Vagina (tissue), 2 donors: ENCODE measurements at regions of chr14 and their contacts with region 1.

Region 1: DNA sequence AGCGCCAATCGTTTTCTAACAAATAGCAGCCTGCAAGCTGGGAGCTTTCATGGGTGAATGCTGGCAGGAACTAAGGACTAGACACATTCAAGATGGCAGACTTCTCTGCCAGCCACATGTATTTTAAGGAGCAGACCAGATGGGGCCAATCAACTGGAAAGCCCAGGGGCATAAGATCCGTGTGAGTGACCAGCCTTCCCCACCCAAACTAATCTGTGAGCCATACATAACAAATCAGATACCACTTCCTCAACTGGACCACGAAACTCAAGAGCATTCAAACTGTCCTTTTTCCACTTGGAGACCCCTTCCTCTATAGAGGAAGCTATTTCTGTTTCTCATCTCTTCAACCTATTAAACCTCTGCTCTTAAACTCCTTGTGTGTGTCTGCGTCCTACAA is 9.7 kb downstream of the TCL1B start:
- DNase-seq: peak in 1 of 2 donors; percentile 13
- H3K4me3 ChIP-seq: no peak overlapping the region
- H3K27ac ChIP-seq: no peak overlapping the region
- H3K4me1 ChIP-seq: no peaks in the 10 kb centered on the region
- H3K27me3 ChIP-seq: no peaks in the 10 kb centered on the region
- CTCF ChIP-seq: no peak
- POLR2A ChIP-seq: no peak

Region 2: GRCh38 chr14:95609387-95609990 is 86.4 kb before region 1 on chr14:
- intact Hi-C with region 1: no loop called
- DNase-seq: no peak
- H3K4me3 ChIP-seq: no peak overlapping the region
- H3K27ac ChIP-seq: no peak overlapping the region
- H3K4me1 ChIP-seq: no peaks in the 10 kb centered on the region
- H3K27me3 ChIP-seq: no peaks in the 10 kb centered on the region
- CTCF ChIP-seq: peak in 1 of 3 experiments; percentile 32
- POLR2A ChIP-seq: no peak

Region 3: DNA sequence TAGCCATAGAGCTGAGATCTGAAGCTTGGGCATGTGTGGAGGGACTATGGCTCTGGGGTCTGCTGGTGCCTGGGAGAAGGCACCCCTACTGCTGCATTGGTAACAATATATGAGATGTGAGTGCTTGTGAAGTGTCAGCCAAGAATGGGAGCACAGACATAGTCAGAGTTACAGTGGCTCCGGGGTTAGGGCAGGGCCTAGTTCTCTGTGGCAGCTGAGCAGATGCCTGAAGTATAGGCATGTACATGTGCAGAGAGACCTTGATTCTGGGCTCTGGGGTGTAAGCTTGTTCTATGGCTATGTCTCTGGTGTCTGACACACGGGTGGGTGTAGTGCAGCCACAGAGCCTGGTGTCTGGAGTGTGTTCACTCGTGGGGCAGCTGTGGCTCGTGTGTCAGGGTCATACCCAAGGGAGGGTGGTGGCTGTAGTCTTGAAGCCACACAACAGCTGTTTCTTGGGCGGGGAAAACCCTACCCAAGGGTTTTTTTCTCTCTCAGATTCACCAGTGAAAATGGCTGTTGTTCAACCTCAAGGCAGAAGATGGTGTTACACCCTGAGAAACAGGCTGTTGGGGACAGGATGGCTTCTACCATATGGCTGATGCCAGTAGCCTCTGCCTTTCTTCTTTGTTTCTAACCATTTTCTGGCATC is 29.9 kb after region 1 on chr14:
- intact Hi-C with region 1: loop called (anchors 1 kb)
- DNase-seq: no peak
- H3K4me3 ChIP-seq: no peak overlapping the region
- H3K27ac ChIP-seq: no peak overlapping the region
- H3K4me1 ChIP-seq: no peaks in the 10 kb centered on the region
- H3K27me3 ChIP-seq: no peaks in the 10 kb centered on the region
- CTCF ChIP-seq: no peak
- POLR2A ChIP-seq: no peak